ENCODE measurements at regions of chr2 and their contacts with region 1.

Region 1: DNA sequence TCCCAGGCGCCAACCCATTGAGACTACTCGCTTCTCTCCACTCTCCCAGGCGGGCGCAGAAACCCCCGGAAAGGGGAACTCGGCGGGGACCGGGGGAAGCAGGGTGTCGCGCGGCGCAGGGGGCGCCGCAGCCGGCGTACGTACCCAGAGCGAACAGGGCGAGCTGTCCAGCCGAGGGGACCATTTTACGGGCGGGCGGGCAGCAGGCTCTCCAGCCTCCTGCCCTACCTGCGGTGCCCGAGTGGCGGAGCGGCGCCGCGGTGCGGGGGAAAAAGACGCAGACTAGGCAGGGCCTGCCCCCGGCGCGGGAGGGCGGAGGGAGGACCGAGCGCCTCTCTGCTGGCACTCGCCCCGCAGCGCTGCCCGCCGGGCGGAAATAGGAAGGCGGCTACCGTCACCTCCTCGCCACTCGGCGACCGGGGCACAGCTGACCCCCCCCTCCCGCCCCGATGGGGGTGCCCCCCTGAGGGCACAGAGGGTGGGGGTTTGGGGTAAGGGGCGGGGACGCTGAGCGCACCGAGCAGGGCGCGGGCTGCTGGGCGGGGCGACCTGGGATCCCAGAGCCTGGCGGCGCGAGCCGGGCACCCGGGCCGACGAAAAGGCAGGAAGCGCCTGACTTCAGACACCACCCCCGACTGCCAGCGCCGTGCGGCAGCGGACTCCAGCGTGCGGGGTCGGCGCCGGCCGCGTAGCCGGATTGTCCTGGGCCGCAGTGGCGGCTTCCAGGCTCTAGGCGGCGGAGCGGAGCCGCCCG is at the start of gene TGFA:
- DNase-seq: peak; percentile 89
- H3K4me3 Mint-ChIP-seq: peak within 1 kb of the TSS; percentile 93
- H3K27ac Mint-ChIP-seq: peak within 1 kb of the TSS; percentile 83
- H3K4me1 Mint-ChIP-seq: peaks cover 15% of the 10 kb centered on the region
- H3K27me3 Mint-ChIP-seq: no peaks in the 10 kb centered on the region
- CTCF ChIP-seq: peak; percentile 84
- total RNA-seq, gene TGFA: 17.9 and 22.5 TPM in 2 replicates

Region 2: DNA sequence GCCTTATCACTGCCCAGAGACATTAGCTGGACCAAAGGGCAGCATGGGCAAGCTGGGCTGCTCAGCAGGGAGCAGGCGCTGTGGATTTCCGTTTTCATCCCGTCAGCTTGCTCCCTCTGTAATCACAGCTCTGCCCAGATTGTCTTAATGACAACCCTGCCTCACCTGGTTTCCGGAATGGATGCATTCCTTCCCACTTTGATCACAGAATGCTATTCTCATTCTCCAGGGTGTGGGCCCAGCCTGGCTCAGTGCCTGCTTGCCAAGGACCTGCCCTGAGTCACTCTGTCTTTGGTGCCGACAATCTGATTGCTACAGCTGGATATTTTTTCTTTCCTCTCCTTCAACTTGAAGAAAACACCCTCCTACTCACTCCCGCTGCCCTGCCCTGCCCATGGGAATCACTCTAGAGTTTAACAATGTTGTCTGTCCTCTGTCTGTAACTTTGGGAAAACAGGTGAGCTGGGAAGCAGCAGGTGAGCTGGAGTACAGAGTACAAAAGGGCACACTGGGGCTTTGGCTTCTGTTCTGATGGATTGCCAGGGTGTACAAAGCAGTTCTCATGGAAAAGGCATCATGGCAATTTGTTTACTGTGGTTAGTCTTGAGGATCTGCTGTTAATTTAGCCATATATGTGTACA is 224.7 kb before region 1 on chr2:
- CTCF ChIA-PET with region 1: interaction called, 8 read pairs
- POLR2A ChIA-PET with region 1: interaction called, 18 read pairs
- intact Hi-C with region 1: no loop called
- DNase-seq: peak; percentile 92
- H3K4me3 Mint-ChIP-seq: peak overlapping the region; percentile 14
- H3K27ac Mint-ChIP-seq: peak overlapping the region; percentile 89
- H3K4me1 Mint-ChIP-seq: peaks cover 13% of the 10 kb centered on the region
- H3K27me3 Mint-ChIP-seq: no peaks in the 10 kb centered on the region
- CTCF ChIP-seq: no peak

Region 3: DNA sequence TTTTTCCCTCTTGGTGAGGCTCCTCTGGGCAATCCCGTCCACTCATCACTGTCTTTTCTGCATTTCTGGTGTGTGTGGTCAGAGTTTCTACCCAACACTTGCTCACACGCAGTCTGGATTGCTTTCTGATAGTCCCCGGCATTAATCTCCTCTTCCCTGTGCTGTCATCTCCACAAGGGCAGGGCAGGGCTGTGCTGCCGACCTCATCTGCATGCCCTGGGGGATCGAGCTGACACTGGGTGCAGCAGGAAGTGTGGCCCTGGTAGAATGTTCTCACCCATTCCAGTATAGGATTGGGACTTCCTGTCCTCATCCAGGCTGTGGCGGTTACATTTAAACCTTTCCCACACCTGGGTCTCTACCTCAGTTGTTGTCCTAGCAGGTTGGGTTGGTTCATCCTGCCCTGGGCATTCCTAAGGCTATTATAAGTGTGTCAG is 171.9 kb before region 1 on chr2:
- CTCF ChIA-PET with region 1: no interaction called
- POLR2A ChIA-PET with region 1: no interaction called
- intact Hi-C with region 1: no loop called
- DNase-seq: peak; percentile 49
- H3K4me3 Mint-ChIP-seq: peak overlapping the region; percentile 64
- H3K27ac Mint-ChIP-seq: peak overlapping the region; percentile 85
- H3K4me1 Mint-ChIP-seq: peaks cover 10% of the 10 kb centered on the region
- H3K27me3 Mint-ChIP-seq: no peaks in the 10 kb centered on the region
- CTCF ChIP-seq: no peak

Region 4: DNA sequence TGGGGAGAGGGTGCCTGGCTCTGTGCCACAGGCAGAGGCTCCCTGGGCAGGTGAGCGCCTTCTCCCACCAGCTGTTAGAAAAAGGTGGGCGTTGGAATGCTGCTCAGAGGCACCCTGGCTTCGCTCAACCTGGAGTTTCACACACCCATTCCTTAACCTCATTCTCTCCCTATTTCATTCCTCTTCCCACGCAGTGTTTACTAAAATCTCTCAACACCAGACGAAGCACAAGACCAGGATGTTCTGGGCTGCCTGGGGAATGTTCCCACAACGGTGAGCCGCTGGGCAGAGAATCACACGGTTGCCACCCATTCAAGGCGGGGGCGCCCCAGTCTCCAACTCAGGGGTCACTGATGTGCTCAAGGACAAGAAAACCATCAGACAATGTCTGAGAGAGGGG is 64.6 kb before region 1 on chr2:
- CTCF ChIA-PET with region 1: interaction called, 3 read pairs
- POLR2A ChIA-PET with region 1: interaction called, 3 read pairs
- intact Hi-C with region 1: loop called (anchors 5 kb)
- DNase-seq: no peak
- H3K4me3 Mint-ChIP-seq: no peak overlapping the region
- H3K27ac Mint-ChIP-seq: peak overlapping the region; percentile 69
- H3K4me1 Mint-ChIP-seq: peaks cover 5% of the 10 kb centered on the region
- H3K27me3 Mint-ChIP-seq: no peaks in the 10 kb centered on the region
- CTCF ChIP-seq: no peak

Region 5: DNA sequence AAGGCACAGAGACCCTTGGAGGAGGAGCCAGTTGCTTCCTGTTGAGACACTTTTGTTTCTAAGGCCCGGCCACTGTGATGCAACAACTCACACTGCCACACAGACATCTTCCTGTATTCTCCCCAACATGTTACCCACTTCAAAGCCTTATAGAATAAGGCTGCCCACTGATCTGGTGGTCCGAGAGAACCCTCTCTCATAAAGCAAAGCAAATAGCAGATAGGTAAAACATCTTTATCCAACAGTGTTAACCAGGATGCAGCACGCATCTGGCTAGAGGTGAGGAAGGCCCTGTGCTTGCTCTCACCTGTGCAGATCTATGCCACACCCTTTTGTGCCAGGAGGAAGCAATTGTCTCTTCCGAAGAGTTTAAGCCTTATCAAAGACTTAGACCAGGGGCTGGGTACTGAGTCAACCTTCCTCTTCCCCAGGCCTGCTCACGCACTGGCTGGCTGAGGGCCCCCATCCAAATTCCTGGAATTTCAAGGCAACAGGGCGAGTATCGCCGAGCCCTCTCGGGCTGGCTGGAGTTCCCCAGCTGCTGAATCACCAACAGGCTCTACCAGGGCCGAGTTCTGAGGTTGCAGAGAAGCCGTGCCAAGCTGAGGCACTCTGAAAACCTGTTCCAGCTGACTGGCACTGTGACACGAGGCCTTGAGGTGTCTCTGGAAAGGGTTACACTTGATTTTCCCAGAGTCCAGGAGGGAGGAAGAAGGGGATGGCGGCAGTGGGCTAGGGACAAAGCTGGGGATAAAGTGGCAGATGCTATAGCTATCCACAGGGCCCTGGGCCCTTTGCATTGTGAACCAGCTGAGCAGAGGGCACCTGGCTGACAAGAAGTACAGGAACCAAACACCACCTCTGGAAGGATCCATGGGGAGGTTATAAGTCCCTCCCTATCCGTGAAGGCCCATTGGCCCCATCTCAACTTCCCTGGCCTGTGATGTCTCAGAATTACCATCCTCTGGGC is 29.5 kb before region 1 on chr2:
- CTCF ChIA-PET with region 1: interaction called, 4 read pairs
- POLR2A ChIA-PET with region 1: interaction called, 62 read pairs
- intact Hi-C with region 1: no loop called
- DNase-seq: peak; percentile 95
- H3K4me3 Mint-ChIP-seq: peak overlapping the region; percentile 49
- H3K27ac Mint-ChIP-seq: peak overlapping the region; percentile 84
- H3K4me1 Mint-ChIP-seq: peaks cover 43% of the 10 kb centered on the region
- H3K27me3 Mint-ChIP-seq: no peaks in the 10 kb centered on the region
- CTCF ChIP-seq: no peak

Region 6: GRCh38 chr2:70570041-70570663 is 16.4 kb after region 1 on chr2:
- CTCF ChIA-PET with region 1: interaction called, 15 read pairs
- POLR2A ChIA-PET with region 1: interaction called, 40 read pairs
- intact Hi-C with region 1: no loop called
- DNase-seq: peak; percentile 94
- H3K4me3 Mint-ChIP-seq: peak overlapping the region; percentile 5
- H3K27ac Mint-ChIP-seq: peak overlapping the region; percentile 93
- H3K4me1 Mint-ChIP-seq: peaks cover 33% of the 10 kb centered on the region
- H3K27me3 Mint-ChIP-seq: no peaks in the 10 kb centered on the region
- CTCF ChIP-seq: no peak

Region 7: DNA sequence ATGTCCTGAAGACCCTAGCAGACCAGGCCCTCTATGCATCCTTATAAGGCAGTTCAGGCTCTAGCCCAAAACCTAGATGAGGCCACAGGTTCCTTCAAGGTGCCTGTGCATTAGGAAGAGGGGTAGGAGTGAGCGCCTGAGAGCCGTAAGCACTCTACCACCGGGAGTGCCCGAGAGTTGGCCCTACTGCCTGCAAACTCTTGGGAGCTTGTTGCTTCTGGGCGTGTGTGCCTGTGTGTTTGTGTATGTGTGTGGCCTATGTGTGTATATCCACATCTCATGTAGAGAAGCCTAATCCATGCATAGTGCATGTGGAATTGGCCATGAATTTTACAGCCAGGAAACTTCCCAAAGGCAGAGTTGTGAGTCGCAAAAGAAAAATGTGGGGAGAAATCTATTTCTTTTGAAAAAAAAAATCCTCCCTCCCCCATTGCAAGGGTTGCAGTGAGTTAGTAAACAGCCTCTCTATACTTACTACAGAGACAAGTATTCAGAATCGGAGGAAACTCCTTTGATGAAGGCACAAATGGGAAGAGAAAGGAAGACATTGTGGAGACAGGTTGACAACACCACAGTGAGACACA is 117.4 kb after region 1 on chr2:
- CTCF ChIA-PET with region 1: no interaction called
- POLR2A ChIA-PET with region 1: no interaction called
- intact Hi-C with region 1: no loop called
- DNase-seq: no peak
- H3K4me3 Mint-ChIP-seq: no peak overlapping the region
- H3K27ac Mint-ChIP-seq: no peak overlapping the region
- H3K4me1 Mint-ChIP-seq: no peaks in the 10 kb centered on the region
- H3K27me3 Mint-ChIP-seq: no peaks in the 10 kb centered on the region
- CTCF ChIP-seq: no peak